ENCODE measurements at regions of chr1 and their contacts with region 1.

Region 1: GRCh38 chr1:213987927-213988506 is at the start of gene PROX1:
- DNase-seq: peak in 1 of 2 experiments; percentile 87
- H3K4me3 ChIP-seq: peak within 1 kb of the TSS; percentile 63
- H3K4me3 Mint-ChIP-seq: peak within 1 kb of the TSS; percentile 99
- H3K27ac Mint-ChIP-seq: peak within 1 kb of the TSS; percentile 89
- H3K4me1 ChIP-seq: peaks cover 25% of the 10 kb centered on the region
- H3K4me1 Mint-ChIP-seq: peaks cover 21% of the 10 kb centered on the region
- H3K27me3 ChIP-seq: no peaks in the 10 kb centered on the region; the same call in 1 of the 2 replicates
- H3K27me3 Mint-ChIP-seq: peaks cover 8% of the 10 kb centered on the region
- CTCF ChIP-seq: peak in 1 of 2 experiments; percentile 32
- total RNA-seq, gene PROX1: 17.6 and 24.5 TPM in 2 replicates

Region 2: DNA sequence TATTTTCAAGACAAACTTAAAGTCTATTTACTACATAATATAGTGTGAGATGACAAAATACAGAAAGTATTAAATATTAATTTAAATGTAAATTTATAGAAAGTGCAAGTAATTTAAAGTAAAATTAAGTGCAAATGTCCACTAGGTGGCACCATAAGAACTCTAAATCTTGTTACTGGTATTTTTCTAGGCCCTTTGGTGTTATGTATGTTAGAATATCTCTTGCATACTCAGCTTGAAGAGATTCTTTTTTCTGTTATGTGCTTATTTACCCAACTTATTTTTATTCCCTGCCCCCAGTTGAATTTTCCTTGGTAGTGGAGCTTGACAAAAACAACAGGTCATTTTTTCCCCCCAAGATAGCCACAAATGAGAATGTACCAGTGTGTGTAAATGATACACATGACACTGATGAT is 865.5 kb before region 1 on chr1:
- CTCF ChIA-PET with region 1: no interaction called
- POLR2A ChIA-PET with region 1: no interaction called
- intact Hi-C with region 1: loop called (anchors 10 kb)
- DNase-seq: peak in 1 of 2 experiments; percentile 39
- H3K4me3 ChIP-seq: no peak overlapping the region
- H3K4me3 Mint-ChIP-seq: no peak overlapping the region
- H3K27ac Mint-ChIP-seq: peak overlapping the region; percentile 65
- H3K4me1 ChIP-seq: peaks cover 22% of the 10 kb centered on the region
- H3K4me1 Mint-ChIP-seq: peaks cover 27% of the 10 kb centered on the region
- H3K27me3 ChIP-seq: no peaks in the 10 kb centered on the region
- H3K27me3 Mint-ChIP-seq: no peaks in the 10 kb centered on the region
- CTCF ChIP-seq: peak in 1 of 2 experiments; percentile 36

Region 3: GRCh38 chr1:213658457-213658856 is 329.6 kb before region 1 on chr1:
- CTCF ChIA-PET with region 1: no interaction called
- POLR2A ChIA-PET with region 1: interaction called, 4 read pairs
- intact Hi-C with region 1: loop called (anchors 10 kb)
- DNase-seq: no peak
- H3K4me3 ChIP-seq: no peak overlapping the region
- H3K4me3 Mint-ChIP-seq: no peak overlapping the region
- H3K27ac Mint-ChIP-seq: no peak overlapping the region
- H3K4me1 ChIP-seq: peaks cover 49% of the 10 kb centered on the region
- H3K4me1 Mint-ChIP-seq: no peaks in the 10 kb centered on the region
- H3K27me3 ChIP-seq: no peaks in the 10 kb centered on the region
- H3K27me3 Mint-ChIP-seq: no peaks in the 10 kb centered on the region
- CTCF ChIP-seq: no peak

Region 4: DNA sequence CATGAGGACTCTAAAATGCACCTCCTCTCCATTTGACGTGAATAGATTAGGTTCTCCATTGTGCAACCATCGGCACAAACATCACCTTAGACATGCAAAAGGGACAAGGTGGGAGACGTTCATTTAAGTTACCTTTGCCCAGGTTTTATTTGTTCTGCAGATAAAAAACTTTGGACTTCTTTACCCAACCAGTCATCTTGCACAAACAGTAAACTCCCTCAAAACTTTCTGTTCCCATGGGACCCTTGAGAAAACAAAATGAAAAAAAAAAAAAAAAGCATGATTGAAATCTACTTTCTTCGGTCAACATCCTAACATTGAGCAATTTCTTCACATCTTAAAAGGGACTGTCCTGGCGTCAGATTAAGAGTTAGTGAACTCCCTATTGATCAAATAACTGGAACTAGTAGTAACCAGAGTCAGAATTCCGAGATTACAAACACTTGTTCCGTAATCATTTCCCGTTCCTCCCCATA is 31.7 kb before region 1 on chr1:
- CTCF ChIA-PET with region 1: no interaction called
- POLR2A ChIA-PET with region 1: no interaction called
- intact Hi-C with region 1: loop called (anchors 1 kb)
- DNase-seq: peak; percentile 77 to 82
- H3K4me3 ChIP-seq: no peak overlapping the region
- H3K4me3 Mint-ChIP-seq: peak overlapping the region; percentile 48
- H3K27ac Mint-ChIP-seq: peak overlapping the region; percentile 69
- H3K4me1 ChIP-seq: peaks cover 33% of the 10 kb centered on the region
- H3K4me1 Mint-ChIP-seq: peaks cover 18% of the 10 kb centered on the region
- H3K27me3 ChIP-seq: no peaks in the 10 kb centered on the region
- H3K27me3 Mint-ChIP-seq: no peaks in the 10 kb centered on the region
- CTCF ChIP-seq: no peak

Region 5: GRCh38 chr1:214050513-214051401 is 62.7 kb after region 1 on chr1:
- CTCF ChIA-PET with region 1: no interaction called
- POLR2A ChIA-PET with region 1: no interaction called
- intact Hi-C with region 1: loop called (anchors 2 kb)
- DNase-seq: peak; percentile 74 to 76
- H3K4me3 ChIP-seq: no peak overlapping the region
- H3K4me3 Mint-ChIP-seq: peak overlapping the region; percentile 0
- H3K27ac Mint-ChIP-seq: peak overlapping the region; percentile 5
- H3K4me1 ChIP-seq: peaks cover 27% of the 10 kb centered on the region
- H3K4me1 Mint-ChIP-seq: peaks cover 25% of the 10 kb centered on the region
- H3K27me3 ChIP-seq: no peaks in the 10 kb centered on the region
- H3K27me3 Mint-ChIP-seq: no peaks in the 10 kb centered on the region
- CTCF ChIP-seq: no peak